CD8-positive, alpha-beta memory T cell (primary cell): ENCODE measurements at regions of chr16 and their contacts with region 1.

Region 1: DNA sequence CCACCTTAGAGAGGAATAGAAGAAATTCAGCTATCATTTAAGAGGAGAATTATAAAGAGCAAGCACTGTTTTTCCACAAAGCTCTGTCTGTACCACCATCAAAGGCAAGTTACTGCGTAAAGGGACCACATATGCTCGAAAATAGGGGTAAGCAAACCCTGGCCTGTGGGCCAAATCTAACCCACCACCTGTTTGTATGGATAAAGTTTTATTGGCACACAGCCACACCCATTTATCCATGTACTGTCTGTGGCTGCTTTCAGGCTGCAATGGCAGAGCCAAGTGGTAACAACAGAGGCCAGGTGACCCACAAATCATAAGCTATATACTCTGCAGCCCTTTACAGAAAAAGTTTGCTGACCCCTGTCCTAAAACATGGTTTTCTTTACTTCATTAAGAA is 180.3 kb downstream of the MRTFB start:
- DNase-seq: no peak
- H3K4me3 ChIP-seq: no peak overlapping the region
- H3K4me3 Mint-ChIP-seq: no peak overlapping the region
- H3K27ac ChIP-seq: no peak overlapping the region
- H3K27ac Mint-ChIP-seq: no peak overlapping the region
- H3K4me1 ChIP-seq: no peaks in the 10 kb centered on the region
- H3K4me1 Mint-ChIP-seq: no peaks in the 10 kb centered on the region
- H3K27me3 ChIP-seq: no peaks in the 10 kb centered on the region
- H3K27me3 Mint-ChIP-seq: no peaks in the 10 kb centered on the region

Region 2: DNA sequence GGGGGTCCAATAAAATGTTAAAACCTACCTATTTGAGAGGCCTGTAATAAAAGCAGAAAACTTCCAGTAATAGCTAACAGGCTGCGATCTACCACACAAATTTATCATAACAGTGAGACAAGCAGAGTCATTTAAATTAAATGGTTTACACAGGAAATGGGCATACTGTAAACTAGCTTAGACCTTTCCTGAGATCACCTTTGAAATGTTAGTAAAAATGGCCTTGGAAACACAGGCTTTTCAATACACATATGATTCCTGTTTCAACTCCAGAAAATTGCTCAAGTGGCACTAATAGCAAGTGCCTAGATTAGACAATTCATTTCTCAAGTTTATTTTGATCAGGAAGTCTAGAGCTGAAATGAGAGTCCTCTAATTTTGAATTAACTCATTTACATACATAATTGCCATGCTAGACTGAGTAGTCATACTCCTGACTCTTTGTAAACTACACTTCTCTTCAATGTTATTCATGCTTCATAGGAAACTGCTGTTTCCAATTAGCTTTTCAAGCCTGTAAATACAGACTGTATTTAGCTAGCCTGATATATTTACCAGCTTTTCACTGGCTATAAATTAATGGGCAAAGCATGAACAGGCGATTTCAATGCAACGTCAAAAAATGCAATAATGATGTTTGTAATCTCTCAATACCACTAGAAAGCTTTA is 335.4 kb after region 1 on chr16:
- CTCF ChIA-PET with region 1: interaction called, 3 read pairs
- POLR2A ChIA-PET with region 1: interaction called, 12 read pairs
- DNase-seq: no peak
- H3K4me3 ChIP-seq: no peak overlapping the region
- H3K4me3 Mint-ChIP-seq: no peak overlapping the region
- H3K27ac ChIP-seq: no peak overlapping the region
- H3K27ac Mint-ChIP-seq: peak overlapping the region in 2 of 8 donors; percentile 8 to 11
- H3K4me1 ChIP-seq: no peaks in the 10 kb centered on the region
- H3K4me1 Mint-ChIP-seq: peaks cover 3 to 17% (median 8%) of the 10 kb centered on the region in 3 donors
- H3K27me3 ChIP-seq: no peaks in the 10 kb centered on the region
- H3K27me3 Mint-ChIP-seq: no peaks in the 10 kb centered on the region